ENCODE measurements at regions of chr2 and their contacts with region 1.

Region 1: DNA sequence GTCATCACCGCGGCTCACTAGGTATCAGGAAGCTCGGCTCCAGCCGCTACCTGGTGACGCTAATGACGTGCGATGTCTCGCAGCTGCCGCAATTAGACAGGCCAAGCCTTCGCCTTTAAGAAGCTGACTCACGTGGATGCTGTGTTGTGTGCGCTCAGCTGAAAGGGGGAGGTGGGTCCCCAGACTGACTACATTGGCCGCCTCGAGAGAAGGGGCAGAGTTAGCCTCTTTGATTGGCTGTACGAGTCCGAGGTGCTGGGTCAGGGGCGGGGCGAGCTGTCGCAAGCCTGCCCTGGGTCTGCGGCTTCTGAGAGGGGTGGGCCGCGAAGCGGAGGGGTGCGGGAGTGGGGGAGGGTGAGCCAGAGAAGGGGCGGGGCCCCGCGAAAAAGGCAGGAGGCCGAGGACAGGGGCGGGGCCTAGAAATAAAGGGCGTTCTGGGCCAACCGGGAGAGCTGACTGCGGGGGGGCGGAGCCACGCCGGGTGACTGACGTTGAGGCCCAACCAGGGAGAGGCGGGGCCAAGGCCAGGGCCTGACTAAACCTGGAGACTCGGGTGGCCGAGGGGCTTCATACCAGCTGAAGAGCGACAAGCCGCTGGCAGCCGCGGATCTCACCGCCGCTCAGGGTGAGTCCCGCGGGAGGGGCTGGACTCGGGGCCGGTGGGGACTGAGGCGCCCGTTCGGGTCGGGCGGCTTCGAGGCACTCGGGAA is at the start of gene YPEL5:
- DNase-seq: peak; percentile 99
- ATAC-seq: peak; percentile 94
- H3K4me3 Mint-ChIP-seq: peak within 1 kb of the TSS; percentile 81
- H3K27ac Mint-ChIP-seq: peak within 1 kb of the TSS; percentile 96
- H3K4me1 Mint-ChIP-seq: peaks cover 55% of the 10 kb centered on the region
- H3K27me3 Mint-ChIP-seq: no peaks in the 10 kb centered on the region
- total RNA-seq, gene YPEL5: 27.2 to 35.8 TPM

Region 2: GRCh38 chr2:28445448-28446258 is 1700.9 kb before region 1 on chr2:
- CTCF ChIA-PET with region 1: no interaction called
- POLR2A ChIA-PET with region 1: no interaction called
- intact Hi-C with region 1: loop called in 1 of 2 experiments (anchors 5 kb)
- DNase-seq: peak; percentile 85
- ATAC-seq: peak; percentile 70
- H3K4me3 Mint-ChIP-seq: peak overlapping the region; percentile 53
- H3K27ac Mint-ChIP-seq: peak overlapping the region; percentile 97
- H3K4me1 Mint-ChIP-seq: peaks cover 81% of the 10 kb centered on the region
- H3K27me3 Mint-ChIP-seq: no peaks in the 10 kb centered on the region

Region 3: DNA sequence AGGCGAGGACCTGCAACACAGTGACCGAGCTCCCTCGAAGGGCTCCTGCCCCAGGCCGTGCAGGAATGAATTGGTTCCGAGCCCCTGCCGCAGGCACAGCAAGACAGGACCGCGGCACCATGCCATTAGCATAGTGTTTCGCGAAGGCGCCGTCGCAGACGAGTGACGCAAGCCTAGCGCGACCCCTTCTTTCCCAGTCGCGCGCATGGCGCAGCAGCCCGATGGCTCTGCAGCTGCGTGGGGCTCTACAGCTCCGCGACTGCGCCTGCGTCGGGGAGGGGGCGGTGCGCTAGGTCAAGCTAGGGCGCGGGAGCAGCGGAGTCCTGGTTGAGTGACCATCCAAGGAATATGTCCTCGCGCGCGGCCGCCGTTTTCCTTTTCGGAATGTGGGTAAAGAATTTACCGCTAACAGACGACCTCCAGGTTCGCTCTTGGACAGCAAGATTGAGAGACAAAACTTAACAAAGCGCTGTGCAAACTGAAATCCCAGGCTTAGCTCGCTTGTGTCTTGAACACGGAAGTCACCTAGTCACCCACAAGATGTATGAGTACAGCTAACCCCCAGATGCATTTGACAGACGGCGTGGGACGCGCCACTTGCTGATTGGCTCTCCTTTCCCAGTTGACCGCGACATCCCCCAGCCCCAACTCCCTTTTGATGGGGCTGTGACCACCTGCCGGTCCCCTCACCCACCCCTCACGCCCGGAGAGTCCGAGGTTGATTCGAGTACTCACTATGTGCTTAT is 1276.3 kb before region 1 on chr2 and contains the start of gene TRMT61B:
- CTCF ChIA-PET with region 1: no interaction called
- POLR2A ChIA-PET with region 1: no interaction called
- intact Hi-C with region 1: loop called in 1 of 2 experiments (anchors 1 kb)
- DNase-seq: peak; percentile 98
- ATAC-seq: peak; percentile 99
- H3K4me3 Mint-ChIP-seq: peak within 1 kb of the TSS; percentile 94
- H3K27ac Mint-ChIP-seq: peak within 1 kb of the TSS; percentile 97
- H3K4me1 Mint-ChIP-seq: peaks cover 25% of the 10 kb centered on the region
- H3K27me3 Mint-ChIP-seq: no peaks in the 10 kb centered on the region
- total RNA-seq, gene TRMT61B: 22.0 to 22.2 TPM

Region 4: GRCh38 chr2:29115797-29116781 is 1030.5 kb before region 1 on chr2:
- CTCF ChIA-PET with region 1: no interaction called
- POLR2A ChIA-PET with region 1: no interaction called
- intact Hi-C with region 1: loop called in 1 of 2 experiments (anchors 1 kb)
- DNase-seq: peak; percentile 88
- ATAC-seq: peak; percentile 74
- H3K4me3 Mint-ChIP-seq: peak overlapping the region; percentile 90
- H3K27ac Mint-ChIP-seq: peak overlapping the region; percentile 96
- H3K4me1 Mint-ChIP-seq: peaks cover 43% of the 10 kb centered on the region
- H3K27me3 Mint-ChIP-seq: peaks cover 5% of the 10 kb centered on the region

Region 5: GRCh38 chr2:30185186-30185585 is 38.6 kb after region 1 on chr2:
- CTCF ChIA-PET with region 1: no interaction called
- POLR2A ChIA-PET with region 1: no interaction called
- intact Hi-C with region 1: no loop called
- DNase-seq: no peak
- ATAC-seq: no peak
- H3K4me3 Mint-ChIP-seq: no peak overlapping the region
- H3K27ac Mint-ChIP-seq: no peak overlapping the region
- H3K4me1 Mint-ChIP-seq: no peaks in the 10 kb centered on the region
- H3K27me3 Mint-ChIP-seq: no peaks in the 10 kb centered on the region

Region 6: GRCh38 chr2:30336978-30337841 is 190.6 kb after region 1 on chr2:
- CTCF ChIA-PET with region 1: interaction called, 4 read pairs
- POLR2A ChIA-PET with region 1: no interaction called
- intact Hi-C with region 1: loop called in 1 of 2 experiments (anchors 5 kb)
- DNase-seq: peak; percentile 82
- ATAC-seq: peak; percentile 77
- H3K4me3 Mint-ChIP-seq: peak overlapping the region; percentile 56
- H3K27ac Mint-ChIP-seq: peak overlapping the region; percentile 98
- H3K4me1 Mint-ChIP-seq: peaks cover 81% of the 10 kb centered on the region
- H3K27me3 Mint-ChIP-seq: no peaks in the 10 kb centered on the region

Region 7: GRCh38 chr2:30447149-30448045 is 300.8 kb after region 1 on chr2 and contains the start of gene LCLAT1:
- CTCF ChIA-PET with region 1: no interaction called
- POLR2A ChIA-PET with region 1: interaction called, 3 read pairs
- intact Hi-C with region 1: loop called (anchors 1 to 5 kb)
- DNase-seq: peak; percentile 91
- ATAC-seq: peak; percentile 80
- H3K4me3 Mint-ChIP-seq: peak within 1 kb of the TSS; percentile 87
- H3K27ac Mint-ChIP-seq: peak within 1 kb of the TSS; percentile 96
- H3K4me1 Mint-ChIP-seq: peaks cover 32% of the 10 kb centered on the region
- H3K27me3 Mint-ChIP-seq: no peaks in the 10 kb centered on the region
- total RNA-seq, gene LCLAT1: 18.5 to 21.7 TPM

Region 8: GRCh38 chr2:31324000-31324633 is 1177.5 kb after region 1 on chr2:
- CTCF ChIA-PET with region 1: no interaction called
- POLR2A ChIA-PET with region 1: no interaction called
- intact Hi-C with region 1: loop called in 1 of 2 experiments (anchors 2 kb)
- DNase-seq: no peak
- ATAC-seq: peak; percentile 70
- H3K4me3 Mint-ChIP-seq: peak overlapping the region; percentile 6
- H3K27ac Mint-ChIP-seq: peak overlapping the region; percentile 52
- H3K4me1 Mint-ChIP-seq: peaks cover 43% of the 10 kb centered on the region
- H3K27me3 Mint-ChIP-seq: no peaks in the 10 kb centered on the region

Measured in activated CD4-positive, alpha-beta T cell treated with anti-CD3 and anti-CD28 coated beads for 36 hours (primary cell).